ENCODE measurements at regions of chr7 and their contacts with region 1.

Region 1: GRCh38 chr7:1503816-1504775 is at the start of gene INTS1:
- DNase-seq: peak; percentile 94
- H3K4me3 ChIP-seq: peak within 1 kb of the TSS; percentile 83 to 95 (median 95)
- H3K27ac ChIP-seq: peak within 1 kb of the TSS; percentile 53
- H3K4me1 ChIP-seq: peaks cover 16% of the 10 kb centered on the region
- H3K27me3 ChIP-seq: no peaks in the 10 kb centered on the region
- CTCF ChIP-seq: peak; percentile 58 to 71
- total RNA-seq, gene INTS1: 51.3 to 81.1 TPM

Region 2: GRCh38 chr7:1526251-1526763 is 22.2 kb after region 1 on chr7:
- CTCF ChIA-PET with region 1: no interaction called
- dilution Hi-C with region 1: no loop called
- in situ Hi-C with region 1: no loop called
- intact Hi-C with region 1: loop called (anchors 2 kb)
- DNase-seq: no peak
- H3K4me3 ChIP-seq: peak overlapping the region in 1 of 3 experiments; percentile 30
- H3K27ac ChIP-seq: no peak overlapping the region
- H3K4me1 ChIP-seq: peaks cover 13% of the 10 kb centered on the region
- H3K27me3 ChIP-seq: no peaks in the 10 kb centered on the region
- CTCF ChIP-seq: no peak

Region 3: DNA sequence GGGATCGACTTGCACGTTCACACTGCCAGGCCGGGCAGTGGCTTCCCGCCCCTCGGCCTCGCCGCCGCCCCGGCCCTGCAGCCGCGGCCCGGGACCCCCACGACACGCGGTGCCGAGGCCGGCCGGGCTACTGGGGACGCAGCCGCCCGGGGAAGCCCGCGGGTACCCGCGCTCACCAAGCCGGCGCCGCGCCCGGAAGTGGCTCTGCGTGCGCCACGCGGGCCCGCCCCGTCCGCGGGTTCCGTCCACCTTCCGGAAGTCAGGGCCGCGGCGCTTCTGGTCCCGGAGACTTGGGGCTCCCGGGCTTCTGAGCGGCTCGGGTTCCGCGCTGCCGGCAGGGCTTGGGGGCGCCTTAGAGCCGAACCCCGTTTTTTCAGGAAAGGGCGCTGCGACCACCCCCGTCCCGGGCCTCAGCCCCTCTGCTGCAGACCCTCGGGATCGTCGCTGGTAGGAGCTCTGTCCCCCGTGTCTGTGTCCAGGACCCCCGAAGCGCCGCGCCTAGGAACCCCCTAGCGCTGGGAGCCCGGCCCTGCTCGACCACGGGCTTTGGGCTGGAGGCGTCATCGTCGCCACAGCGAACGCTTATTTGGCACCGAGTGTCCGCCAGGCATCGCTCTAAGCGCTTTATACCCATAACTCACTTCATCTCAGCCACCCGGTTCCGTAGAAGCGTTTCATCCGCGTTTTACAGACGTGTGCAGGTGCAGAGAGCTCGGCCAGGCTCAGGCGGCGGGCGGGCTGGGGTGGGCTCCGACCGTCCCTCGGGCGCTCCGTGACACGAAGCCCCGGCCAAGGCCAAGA is 65.9 kb after region 1 on chr7 and contains the start of gene PSMG3:
- CTCF ChIA-PET with region 1: no interaction called
- dilution Hi-C with region 1: loop called (anchors 5 kb)
- in situ Hi-C with region 1: no loop called
- intact Hi-C with region 1: no loop called
- DNase-seq: peak; percentile 88
- H3K4me3 ChIP-seq: peak within 1 kb of the TSS; percentile 84 to 97 (median 93)
- H3K27ac ChIP-seq: peak within 1 kb of the TSS; percentile 67
- H3K4me1 ChIP-seq: peaks cover 27% of the 10 kb centered on the region
- H3K27me3 ChIP-seq: no peaks in the 10 kb centered on the region
- CTCF ChIP-seq: peak in 1 of 2 donors; percentile 33
- total RNA-seq, gene PSMG3: 25.8 to 34.0 TPM